ENCODE measurements at regions of chr6 and their contacts with region 1.

Region 1: DNA sequence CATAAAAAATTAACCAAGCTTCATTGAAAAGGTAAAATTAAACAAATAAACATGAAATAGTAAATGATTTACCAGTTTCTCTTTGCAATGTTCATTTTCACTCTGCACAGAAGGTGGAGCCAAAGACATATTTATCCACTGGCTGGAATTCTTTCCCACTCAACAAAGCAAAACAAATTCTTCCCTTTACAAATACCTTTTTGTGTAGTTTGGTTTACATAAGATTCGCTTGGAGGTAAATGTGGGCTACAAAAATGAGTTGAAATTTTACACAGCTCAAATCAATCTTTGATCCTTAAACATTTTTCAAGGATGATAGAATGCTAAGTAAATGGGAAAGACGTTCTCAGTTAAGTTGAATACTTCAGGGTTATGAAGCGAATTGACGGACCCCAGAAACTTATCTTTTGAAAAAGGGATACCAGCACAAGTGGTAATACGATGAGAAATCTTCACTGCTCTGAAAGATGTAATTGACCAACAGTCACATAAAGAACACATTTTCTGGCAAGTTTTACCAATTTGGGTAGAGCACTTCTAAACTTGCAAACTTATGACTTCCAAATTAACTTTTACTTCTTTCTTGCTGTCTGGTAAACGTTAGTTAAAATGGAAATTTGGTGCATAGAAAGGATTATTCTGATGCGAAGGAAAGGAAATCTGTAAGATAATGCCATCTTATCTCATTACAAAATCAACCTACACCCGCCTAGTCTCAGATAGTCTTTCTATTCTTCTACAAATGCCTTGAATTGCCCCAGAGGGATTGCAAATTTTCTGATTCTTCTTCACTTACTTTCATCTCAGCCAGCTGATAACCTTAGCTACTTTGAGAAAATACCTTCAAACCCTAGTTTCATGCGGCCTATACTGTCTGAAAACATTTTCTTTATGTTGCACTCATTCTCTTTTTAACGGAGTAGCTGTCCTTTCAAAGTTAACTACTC is 4.7 kb upstream of the GJA1 start:
- DNase-seq: no peak
- ATAC-seq: peak in 1 of 4 donors; percentile 82
- H3K4me3 ChIP-seq: no peak overlapping the region
- H3K27ac ChIP-seq: no peak overlapping the region
- H3K4me1 ChIP-seq: no peaks in the 10 kb centered on the region
- H3K27me3 ChIP-seq: peaks cover 0 to 10% (median 0%) of the 10 kb centered on the region in 3 donors
- CTCF ChIP-seq: peak; percentile 71

Region 2: GRCh38 chr6:121849477-121849876 is 418.7 kb after region 1 on chr6:
- intact Hi-C with region 1: loop called (anchors 2 to 5 kb)
- DNase-seq: no peak
- ATAC-seq: peak; percentile 71 to 88 (median 82)
- H3K4me3 ChIP-seq: no peak overlapping the region
- H3K27ac ChIP-seq: no peak overlapping the region
- H3K4me1 ChIP-seq: no peaks in the 10 kb centered on the region
- H3K27me3 ChIP-seq: no peaks in the 10 kb centered on the region
- CTCF ChIP-seq: peak; percentile 73

Region 3: DNA sequence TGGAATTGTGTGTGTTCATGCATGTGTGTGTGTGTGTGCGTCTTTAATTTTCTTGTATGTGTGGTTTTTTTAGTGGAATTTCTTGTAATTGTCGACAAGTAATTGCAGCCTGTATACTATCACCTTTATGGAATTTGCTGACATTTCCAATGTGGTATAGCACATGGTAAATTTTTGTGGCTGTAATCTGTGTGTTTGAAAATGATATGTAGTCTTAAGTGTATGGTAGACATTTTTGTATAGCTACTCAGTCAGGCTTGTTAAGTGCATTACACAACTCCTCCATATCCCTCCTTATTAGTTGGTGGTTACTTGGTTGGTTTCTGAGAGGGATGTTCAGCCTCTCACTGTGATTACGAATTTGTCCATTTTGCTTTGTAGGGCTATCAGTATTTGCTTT is 584.2 kb after region 1 on chr6:
- intact Hi-C with region 1: loop called in 1 of 2 experiments (anchors 5 kb)
- DNase-seq: no peak
- ATAC-seq: no peak
- H3K4me3 ChIP-seq: no peak overlapping the region
- H3K27ac ChIP-seq: no peak overlapping the region
- H3K4me1 ChIP-seq: peaks cover 5% of the 10 kb centered on the region
- H3K27me3 ChIP-seq: no peaks in the 10 kb centered on the region
- CTCF ChIP-seq: no peak

Region 4: GRCh38 chr6:122033539-122034181 is 602.9 kb after region 1 on chr6:
- intact Hi-C with region 1: loop called (anchors 2 to 5 kb)
- DNase-seq: no peak
- ATAC-seq: peak; percentile 81 to 88 (median 86)
- H3K4me3 ChIP-seq: no peak overlapping the region
- H3K27ac ChIP-seq: no peak overlapping the region
- H3K4me1 ChIP-seq: no peaks in the 10 kb centered on the region
- H3K27me3 ChIP-seq: no peaks in the 10 kb centered on the region
- CTCF ChIP-seq: peak; percentile 68

Region 5: DNA sequence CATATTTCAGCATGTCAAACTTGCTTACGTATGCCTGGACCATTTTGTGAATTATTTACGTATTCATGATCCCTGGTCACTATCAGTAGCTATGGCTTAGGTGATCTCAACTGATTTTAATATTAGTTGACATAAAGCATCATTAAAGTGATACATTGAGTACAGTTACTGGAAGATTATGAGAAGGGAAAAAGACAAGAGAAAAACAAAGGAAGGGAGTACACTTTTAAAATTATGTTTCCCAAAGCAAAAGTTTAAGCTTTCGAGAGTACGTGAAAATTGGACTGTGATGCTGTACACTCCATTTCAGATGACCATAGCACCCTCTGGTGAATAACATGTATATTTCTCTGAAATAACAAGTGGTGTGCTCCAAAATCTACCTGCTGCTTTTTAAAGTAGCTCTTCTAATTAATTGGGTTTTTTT is 753.6 kb after region 1 on chr6:
- intact Hi-C with region 1: loop called (anchors 2 to 5 kb)
- DNase-seq: no peak
- ATAC-seq: peak in 1 of 4 donors; percentile 78
- H3K4me3 ChIP-seq: peak overlapping the region; percentile 13
- H3K27ac ChIP-seq: no peak overlapping the region
- H3K4me1 ChIP-seq: no peaks in the 10 kb centered on the region
- H3K27me3 ChIP-seq: no peaks in the 10 kb centered on the region
- CTCF ChIP-seq: peak; percentile 57

Region 6: DNA sequence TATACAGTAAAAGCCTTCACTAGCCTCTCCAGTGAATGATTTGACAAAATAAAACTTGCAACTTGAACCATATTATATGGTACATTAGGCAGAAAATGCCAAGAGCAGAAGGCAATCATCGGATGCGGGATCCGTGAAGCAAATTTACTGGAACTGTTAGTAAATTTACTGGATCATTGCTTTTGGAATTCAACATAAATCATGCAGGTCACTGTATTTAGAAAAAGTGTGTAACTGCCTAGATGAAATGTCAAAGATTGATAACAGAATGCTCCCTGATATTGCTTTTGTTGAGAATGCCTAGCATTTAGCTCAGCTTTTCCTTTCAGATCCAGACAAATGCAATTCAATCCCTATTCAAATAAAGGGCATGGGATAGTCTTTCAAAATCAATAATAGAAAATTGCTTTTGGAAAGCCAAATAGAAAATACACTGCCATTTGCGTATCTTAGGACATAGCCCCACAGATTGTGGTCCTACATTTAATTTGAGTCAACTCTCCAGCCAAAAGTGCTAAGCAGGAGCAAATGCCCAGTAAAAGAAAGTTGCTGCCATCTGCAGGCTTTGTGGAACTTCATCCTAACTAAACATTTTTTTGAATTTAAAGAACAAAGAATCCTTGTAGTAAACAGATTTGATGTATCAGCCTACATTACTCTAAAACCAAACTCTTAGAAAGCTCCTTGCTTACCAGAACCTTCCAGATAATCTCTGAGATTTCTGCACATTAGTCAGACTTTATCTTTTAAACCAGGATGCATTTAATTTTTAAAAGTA is 859.2 kb after region 1 on chr6:
- intact Hi-C with region 1: loop called in 1 of 2 experiments (anchors 10 kb)
- DNase-seq: no peak
- ATAC-seq: no peak
- H3K4me3 ChIP-seq: no peak overlapping the region
- H3K27ac ChIP-seq: no peak overlapping the region
- H3K4me1 ChIP-seq: peaks cover 4% of the 10 kb centered on the region
- H3K27me3 ChIP-seq: no peaks in the 10 kb centered on the region
- CTCF ChIP-seq: peak; percentile 42

Measured in psoas muscle (tissue), 8 donors.